ENCODE measurements at regions of chr6 and their contacts with region 1.

Region 1: DNA sequence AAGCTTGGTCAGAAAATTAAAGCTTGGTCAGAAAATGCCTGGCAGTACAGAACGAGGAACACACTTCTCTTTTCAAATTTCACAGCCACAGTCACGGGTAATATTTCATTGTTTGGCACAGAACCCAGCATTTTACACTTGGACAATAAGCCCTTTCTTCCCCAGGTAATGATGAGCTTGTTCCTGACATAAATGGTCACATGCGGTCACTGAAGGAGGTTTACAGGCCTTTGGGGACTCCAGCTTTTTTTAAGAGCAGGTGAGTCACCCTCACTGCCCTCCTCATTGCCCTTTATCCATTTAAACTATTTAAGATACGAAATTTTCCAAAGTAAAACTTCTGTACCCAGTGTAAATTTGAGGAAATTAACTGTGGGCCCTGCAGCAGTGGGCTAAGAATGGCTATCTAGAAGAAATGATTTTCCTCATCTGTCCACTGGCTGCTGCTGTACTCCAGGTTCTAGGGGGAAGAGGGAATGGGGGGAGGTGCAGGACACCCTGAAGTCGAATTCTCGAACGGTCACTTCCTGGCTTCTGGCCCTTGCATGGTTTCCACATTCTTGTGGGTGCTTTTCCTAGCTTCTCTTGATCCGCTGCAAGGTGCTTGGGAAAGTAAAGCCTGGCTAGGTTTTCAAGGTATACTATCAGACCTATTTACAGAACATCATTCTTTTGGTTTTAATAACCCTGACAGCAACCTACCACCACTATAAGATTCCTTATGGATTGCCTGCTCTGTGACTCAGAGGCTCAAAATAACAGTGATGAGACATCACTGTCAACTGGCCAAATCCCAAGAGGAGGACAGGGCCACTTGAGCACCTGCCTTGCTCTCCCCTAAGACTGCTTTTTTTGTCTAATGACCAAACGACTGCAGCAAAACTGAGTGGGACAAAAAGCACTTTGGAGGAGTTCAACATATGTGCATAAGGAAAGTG is 75.8 kb downstream of the PREP start:
- DNase-seq: peak; percentile 22 to 54
- ATAC-seq: peak; percentile 78 to 90 (median 86)
- H3K4me3 ChIP-seq: peak overlapping the region; percentile 40
- H3K27ac ChIP-seq: peak overlapping the region; percentile 98
- H3K4me1 ChIP-seq: peaks cover 60% of the 10 kb centered on the region
- H3K27me3 ChIP-seq: no peaks in the 10 kb centered on the region
- CTCF ChIP-seq: no peak

Region 2: DNA sequence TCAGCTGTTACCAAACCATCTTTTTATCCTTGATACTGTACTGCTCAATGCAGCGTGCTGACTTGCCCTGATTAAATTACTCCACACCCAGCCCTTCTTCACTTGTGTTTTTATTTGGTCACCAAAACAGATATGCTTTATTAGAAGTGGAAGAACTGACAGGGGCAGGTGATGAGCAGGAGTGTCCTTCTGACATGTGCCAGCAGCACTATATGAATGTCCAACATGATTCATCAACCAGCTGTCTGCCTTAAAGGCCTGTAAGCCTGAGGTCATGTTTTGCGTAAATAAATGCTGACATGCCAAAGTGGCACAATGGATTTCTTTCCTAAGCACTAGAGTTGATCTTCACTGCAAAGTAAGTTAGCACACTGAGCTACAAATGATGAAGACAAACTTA is 162.7 kb before region 1 on chr6:
- intact Hi-C with region 1: loop called in 1 of 2 experiments (anchors 5 kb)
- DNase-seq: peak; percentile 42 to 56
- ATAC-seq: peak; percentile 87 to 96 (median 94)
- H3K4me3 ChIP-seq: peak overlapping the region; percentile 24
- H3K27ac ChIP-seq: peak overlapping the region; percentile 88
- H3K4me1 ChIP-seq: peaks cover 72% of the 10 kb centered on the region
- H3K27me3 ChIP-seq: no peaks in the 10 kb centered on the region
- CTCF ChIP-seq: no peak

Region 3: DNA sequence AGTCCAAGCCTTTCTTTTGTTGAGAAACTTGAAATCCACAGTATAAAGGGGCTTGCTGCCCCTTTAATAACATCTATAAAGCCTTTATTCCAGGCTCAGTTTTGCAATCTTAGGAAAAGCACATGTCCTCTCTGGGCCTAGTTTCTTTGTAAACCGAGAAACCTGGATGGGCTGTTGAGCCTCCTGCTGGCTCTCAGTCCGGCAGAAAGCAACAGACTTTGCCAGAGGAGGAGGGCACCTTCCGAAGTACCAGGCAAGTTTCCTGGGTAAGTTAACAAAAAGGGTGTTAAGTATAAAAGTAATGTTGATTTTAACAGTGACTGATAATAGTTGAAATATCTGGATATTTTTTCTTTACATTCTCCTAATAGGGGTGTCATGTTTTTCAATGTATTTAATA is 48.3 kb before region 1 on chr6:
- intact Hi-C with region 1: loop called in 1 of 2 experiments (anchors 2 kb)
- DNase-seq: peak in 1 of 2 donors; percentile 57
- ATAC-seq: peak; percentile 51 to 82 (median 66)
- H3K4me3 ChIP-seq: peak overlapping the region; percentile 68
- H3K27ac ChIP-seq: peak overlapping the region; percentile 90
- H3K4me1 ChIP-seq: peaks cover 51% of the 10 kb centered on the region
- H3K27me3 ChIP-seq: no peaks in the 10 kb centered on the region
- CTCF ChIP-seq: no peak

Region 4: GRCh38 chr6:105363100-105363754 is 36.1 kb after region 1 on chr6:
- intact Hi-C with region 1: loop called in 1 of 2 experiments (anchors 5 kb)
- DNase-seq: no peak
- ATAC-seq: peak in 3 of 4 donors; percentile 53 to 76 (median 64)
- H3K4me3 ChIP-seq: no peak overlapping the region
- H3K27ac ChIP-seq: peak overlapping the region; percentile 72
- H3K4me1 ChIP-seq: peaks cover 29% of the 10 kb centered on the region
- H3K27me3 ChIP-seq: no peaks in the 10 kb centered on the region
- CTCF ChIP-seq: peak; percentile 36

Region 5: GRCh38 chr6:106097411-106098231 is 770.5 kb after region 1 on chr6:
- intact Hi-C with region 1: no loop called
- DNase-seq: no peak
- ATAC-seq: peak in 1 of 4 donors; percentile 54
- H3K4me3 ChIP-seq: peak overlapping the region; percentile 60
- H3K27ac ChIP-seq: peak overlapping the region; percentile 64
- H3K4me1 ChIP-seq: peaks cover 6% of the 10 kb centered on the region
- H3K27me3 ChIP-seq: peaks cover 2 to 19% (median 3%) of the 10 kb centered on the region in 3 donors
- CTCF ChIP-seq: no peak

Measured in psoas muscle (tissue), 8 donors.